Heart right ventricle (tissue), 16 donors: ENCODE measurements at regions of chr10 and their contacts with region 1.

Region 1: GRCh38 chr10:21099291-21100062 is 202.4 kb upstream of the NEBL start:
- DNase-seq: no peak
- ATAC-seq: peak in 4 of 8 donors; percentile 46 to 62 (median 50)
- H3K4me3 ChIP-seq: no peak overlapping the region
- H3K27ac ChIP-seq: peak overlapping the region in 1 of 10 donors; percentile 28
- H3K4me1 ChIP-seq: peaks cover 0 to 19% (median 8%) of the 10 kb centered on the region in 9 donors
- H3K27me3 ChIP-seq: no peaks in the 10 kb centered on the region
- CTCF ChIP-seq: no peak

Region 2: GRCh38 chr10:20839141-20839540 is 260.3 kb before region 1 on chr10:
- intact Hi-C with region 1: no loop called
- DNase-seq: no peak
- ATAC-seq: no peak
- H3K4me3 ChIP-seq: no peak overlapping the region
- H3K27ac ChIP-seq: no peak overlapping the region
- H3K4me1 ChIP-seq: peaks cover 0 to 30% (median 9%) of the 10 kb centered on the region in 9 donors
- H3K27me3 ChIP-seq: no peaks in the 10 kb centered on the region
- CTCF ChIP-seq: no peak

Region 3: GRCh38 chr10:21194464-21194993 is 95.1 kb after region 1 on chr10:
- intact Hi-C with region 1: loop called in 1 of 10 experiments (anchors 10 kb)
- DNase-seq: no peak
- ATAC-seq: peak in 5 of 8 donors; percentile 56 to 89 (median 79)
- H3K4me3 ChIP-seq: no peak overlapping the region
- H3K27ac ChIP-seq: peak overlapping the region in 1 of 10 donors; percentile 3
- H3K4me1 ChIP-seq: peaks cover 0 to 17% (median 0%) of the 10 kb centered on the region in 9 donors
- H3K27me3 ChIP-seq: no peaks in the 10 kb centered on the region
- CTCF ChIP-seq: no peak